ENCODE measurements at regions of chr13 and their contacts with region 1.

Region 1: GRCh38 chr13:112873851-112874750 is 94.9 kb upstream of the MCF2L start:
- DNase-seq: peak; percentile 22
- H3K4me3 ChIP-seq: peak overlapping the region in 1 of 4 donors; percentile 7
- H3K27ac ChIP-seq: peak overlapping the region in 2 of 4 donors; percentile 52 to 73
- H3K4me1 ChIP-seq: peaks cover 0 to 11% (median 6%) of the 10 kb centered on the region in 3 donors
- H3K27me3 ChIP-seq: no peaks in the 10 kb centered on the region
- CTCF ChIP-seq: peak; percentile 65 to 88 (median 85)
- POLR2A ChIP-seq: no peak

Region 2: DNA sequence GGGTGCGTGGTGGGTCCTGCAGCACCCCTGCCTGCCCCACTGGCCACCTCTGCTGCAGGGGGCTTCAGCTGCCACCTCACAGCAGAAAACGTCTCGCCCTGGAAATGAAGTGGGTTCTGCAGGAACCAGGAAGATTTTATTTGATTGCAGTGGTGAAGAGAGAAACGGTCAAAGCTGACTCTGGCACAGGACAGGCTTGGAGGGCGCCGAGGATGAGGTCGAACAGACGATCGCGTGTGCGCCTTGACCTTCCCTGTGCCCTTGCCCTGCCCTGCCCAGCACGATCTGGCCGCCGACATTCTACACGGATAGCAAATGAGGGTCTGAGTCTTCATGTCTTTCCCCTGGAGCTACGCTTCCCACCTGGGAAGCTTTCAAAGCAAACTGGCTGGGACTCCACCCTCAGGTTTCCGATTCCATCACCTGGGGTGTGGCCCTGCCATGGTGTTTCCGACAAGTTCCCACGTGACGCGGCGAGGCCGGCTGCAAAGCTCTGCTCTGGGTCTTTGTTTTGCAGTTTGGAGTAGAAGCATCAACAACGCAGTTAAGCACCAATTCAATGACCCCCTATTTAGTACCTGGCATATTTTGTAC is 235.8 kb before region 1 on chr13:
- intact Hi-C with region 1: loop called (anchors 10 kb)
- DNase-seq: no peak
- H3K4me3 ChIP-seq: no peak overlapping the region
- H3K27ac ChIP-seq: no peak overlapping the region
- H3K4me1 ChIP-seq: peaks cover 0 to 7% (median 0%) of the 10 kb centered on the region in 3 donors
- H3K27me3 ChIP-seq: peaks cover 0 to 71% (median 0%) of the 10 kb centered on the region in 4 donors
- CTCF ChIP-seq: no peak
- POLR2A ChIP-seq: no peak

Measured in esophagus squamous epithelium (tissue), 5 donors.